Ovary (tissue), 10 donors: ENCODE measurements at regions of chr4 and their contacts with region 1.

Region 1: DNA sequence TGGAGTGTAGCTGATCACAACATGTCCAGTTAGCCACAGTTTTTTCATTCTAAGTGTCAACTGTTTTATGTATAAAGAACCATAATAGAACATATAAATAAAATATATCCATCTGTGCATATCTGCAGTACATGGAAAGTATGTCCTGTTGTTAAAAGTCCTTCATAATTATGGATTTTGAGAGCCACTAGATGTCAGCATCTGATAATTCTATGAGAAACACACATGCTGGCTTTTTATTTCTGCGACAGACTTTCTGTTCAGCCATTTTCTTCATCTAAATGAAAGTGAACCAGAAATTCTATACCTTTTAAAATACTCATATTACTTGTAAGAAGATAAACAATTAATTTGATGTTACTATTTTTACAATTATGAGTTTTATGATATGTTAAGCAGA is 251.5 kb downstream of the GPM6A start:
- DNase-seq: no peak
- H3K4me3 ChIP-seq: no peak overlapping the region
- H3K27ac ChIP-seq: no peak overlapping the region
- H3K4me1 ChIP-seq: no peaks in the 10 kb centered on the region
- H3K27me3 ChIP-seq: no peaks in the 10 kb centered on the region
- CTCF ChIP-seq: no peak
- EP300 ChIP-seq: no peak
- POLR2A ChIP-seq: no peak

Region 2: GRCh38 chr4:174887710-174888109 is 672.9 kb before region 1 on chr4:
- intact Hi-C with region 1: no loop called
- DNase-seq: no peak
- H3K4me3 ChIP-seq: no peak overlapping the region
- H3K27ac ChIP-seq: no peak overlapping the region
- H3K4me1 ChIP-seq: no peaks in the 10 kb centered on the region
- H3K27me3 ChIP-seq: no peaks in the 10 kb centered on the region
- CTCF ChIP-seq: no peak
- EP300 ChIP-seq: no peak
- POLR2A ChIP-seq: no peak

Region 3: DNA sequence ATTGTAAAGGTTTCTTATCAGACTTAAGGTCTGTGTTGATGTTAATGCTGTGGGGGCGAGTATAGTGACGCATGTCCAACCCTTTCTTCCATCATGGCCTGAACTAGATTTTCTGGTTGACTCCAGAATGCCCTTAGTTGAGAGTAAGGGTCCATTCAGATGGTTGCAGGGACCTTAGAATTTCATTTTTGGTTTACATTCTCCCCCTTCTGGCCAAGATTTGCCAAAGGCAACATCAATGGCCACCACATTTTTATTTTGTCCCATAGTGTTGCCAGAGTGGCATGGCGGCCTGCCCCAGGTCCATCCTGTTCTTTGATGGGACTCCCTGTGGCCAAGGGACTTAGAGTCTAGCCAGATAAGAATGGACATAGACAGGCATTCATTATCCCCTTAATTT is 117.1 kb before region 1 on chr4:
- intact Hi-C with region 1: no loop called
- DNase-seq: no peak
- H3K4me3 ChIP-seq: no peak overlapping the region
- H3K27ac ChIP-seq: no peak overlapping the region
- H3K4me1 ChIP-seq: no peaks in the 10 kb centered on the region
- H3K27me3 ChIP-seq: no peaks in the 10 kb centered on the region
- CTCF ChIP-seq: no peak
- EP300 ChIP-seq: no peak
- POLR2A ChIP-seq: no peak

Region 4: GRCh38 chr4:175691791-175692190 is 131.2 kb after region 1 on chr4:
- intact Hi-C with region 1: no loop called
- DNase-seq: no peak
- H3K4me3 ChIP-seq: no peak overlapping the region
- H3K27ac ChIP-seq: no peak overlapping the region
- H3K4me1 ChIP-seq: no peaks in the 10 kb centered on the region
- H3K27me3 ChIP-seq: no peaks in the 10 kb centered on the region
- CTCF ChIP-seq: no peak
- EP300 ChIP-seq: no peak
- POLR2A ChIP-seq: no peak

Region 5: DNA sequence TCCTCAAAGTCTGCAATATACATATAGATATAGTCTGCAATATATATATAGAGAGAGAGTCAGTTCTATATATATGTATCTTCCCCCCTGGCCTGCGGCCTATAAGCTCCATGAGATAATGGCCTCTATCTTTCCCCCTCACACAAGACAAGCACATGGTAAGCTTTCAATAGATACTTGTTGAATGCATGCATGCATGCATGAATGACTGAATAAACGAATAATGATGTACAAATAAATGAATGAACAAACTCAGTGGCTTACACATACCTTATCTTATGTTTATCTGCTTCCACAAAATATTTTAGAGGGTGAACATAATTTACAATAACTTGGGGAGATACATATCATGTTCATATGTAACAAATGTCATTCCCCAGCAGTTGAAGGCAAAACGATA is 257.8 kb after region 1 on chr4:
- intact Hi-C with region 1: loop called in 1 of 4 experiments (anchors 5 kb)
- DNase-seq: no peak
- H3K4me3 ChIP-seq: no peak overlapping the region
- H3K27ac ChIP-seq: no peak overlapping the region
- H3K4me1 ChIP-seq: no peaks in the 10 kb centered on the region
- H3K27me3 ChIP-seq: no peaks in the 10 kb centered on the region
- CTCF ChIP-seq: no peak
- EP300 ChIP-seq: no peak
- POLR2A ChIP-seq: no peak